ENCODE measurements at regions of chr1 and their contacts with region 1.

Region 1: DNA sequence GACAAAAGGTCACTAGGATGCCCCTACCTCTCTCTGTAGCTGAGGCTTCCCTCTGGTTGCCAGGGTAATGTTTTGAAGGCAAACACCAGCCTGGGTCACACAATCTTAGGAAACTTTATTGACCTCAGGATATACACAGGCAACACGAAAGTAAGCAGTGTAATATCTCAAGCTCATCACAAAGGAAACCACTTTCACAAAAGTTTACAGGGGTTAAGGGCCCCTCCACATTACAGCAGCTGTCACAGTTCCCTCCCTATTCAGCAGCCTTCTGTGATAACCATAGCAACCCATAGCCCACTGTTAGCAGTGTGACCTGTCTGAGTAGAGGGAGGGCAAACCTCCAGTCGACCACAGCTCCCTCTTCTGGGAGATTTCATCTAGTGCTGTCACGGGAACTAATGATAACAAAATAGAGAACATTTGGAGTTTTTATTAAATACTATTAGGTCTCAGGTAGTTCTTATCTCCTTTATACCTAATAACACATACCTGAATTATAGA is 149.8 kb downstream of the PTPRC start:
- DNase-seq: peak in 1 of 2 experiments; percentile 53
- H3K4me3 ChIP-seq: no peak overlapping the region
- H3K27ac ChIP-seq: peak overlapping the region; percentile 37
- H3K4me1 ChIP-seq: peaks cover 0 to 9% (median 7%) of the 10 kb centered on the region in 4 experiments; a peak in 4 of 7 replicates
- H3K27me3 ChIP-seq: no peaks in the 10 kb centered on the region
- CTCF ChIP-seq: peak; percentile 60 to 75 (median 60)
- EP300 ChIP-seq: no peak
- POLR2A ChIP-seq: no peak
- RAD21 ChIP-seq: peak; percentile 57 to 67

Region 2: DNA sequence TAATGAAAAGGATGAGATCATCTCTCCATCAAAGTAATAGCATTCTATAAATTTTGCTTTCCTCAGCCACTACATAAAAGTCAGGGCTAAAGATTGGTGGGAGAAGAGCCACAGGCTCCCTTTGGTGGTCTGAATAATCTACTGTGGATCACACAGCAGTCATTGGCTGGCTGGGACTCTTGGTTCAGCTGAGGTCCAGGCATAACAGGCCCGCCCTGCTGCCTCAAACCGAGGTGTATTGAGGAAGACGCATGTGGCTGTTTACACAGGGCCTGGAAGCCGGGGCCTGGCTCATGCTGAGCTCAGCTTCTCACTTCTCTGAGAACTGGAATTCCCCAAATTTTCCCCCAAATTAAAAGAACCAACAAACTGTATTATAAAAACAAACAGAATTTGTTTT is 10.6 kb before region 1 on chr1:
- CTCF ChIA-PET with region 1: interaction called, 21 read pairs
- POLR2A ChIA-PET with region 1: no interaction called
- DNase-seq: no peak
- H3K4me3 ChIP-seq: no peak overlapping the region
- H3K27ac ChIP-seq: no peak overlapping the region
- H3K4me1 ChIP-seq: peaks cover 0 to 5% (median 0%) of the 10 kb centered on the region in 4 experiments; a peak in 2 of 7 replicates
- H3K27me3 ChIP-seq: no peaks in the 10 kb centered on the region
- CTCF ChIP-seq: no peak
- EP300 ChIP-seq: no peak
- POLR2A ChIP-seq: no peak
- RAD21 ChIP-seq: no peak

Region 3: DNA sequence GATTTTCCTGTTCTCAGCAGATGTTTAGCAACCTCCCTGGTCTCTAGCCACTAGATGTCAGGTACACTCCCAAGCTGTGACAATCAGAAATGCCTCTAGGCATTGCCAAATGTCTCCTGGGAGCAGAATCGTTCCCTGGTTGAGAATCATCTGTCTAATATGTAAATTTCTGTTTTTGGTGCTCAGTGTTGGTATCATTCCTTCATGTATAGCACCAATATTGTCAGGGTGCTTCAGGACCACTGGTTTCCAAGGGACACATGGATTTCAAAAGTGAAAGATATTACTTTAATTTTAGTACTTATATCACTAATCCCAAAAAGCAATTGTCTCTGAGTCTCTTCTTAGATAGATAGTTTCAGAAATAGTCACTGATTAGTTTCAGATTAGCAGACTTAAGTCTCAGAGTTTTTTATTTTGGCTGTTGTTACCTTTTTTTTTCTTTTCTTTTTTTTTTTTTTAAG is 10.3 kb after region 1 on chr1:
- CTCF ChIA-PET with region 1: interaction called, 23 read pairs
- POLR2A ChIA-PET with region 1: no interaction called
- DNase-seq: no peak
- H3K4me3 ChIP-seq: no peak overlapping the region
- H3K27ac ChIP-seq: no peak overlapping the region
- H3K4me1 ChIP-seq: no peaks in the 10 kb centered on the region
- H3K27me3 ChIP-seq: no peaks in the 10 kb centered on the region
- CTCF ChIP-seq: no peak
- EP300 ChIP-seq: no peak
- POLR2A ChIP-seq: no peak
- RAD21 ChIP-seq: 0 out of 4 replicates have a peak, but pooled peaks of 1 of the 2 experiments have one; percentile 15

Region 4: GRCh38 chr1:198809247-198809646 is 20.6 kb after region 1 on chr1:
- CTCF ChIA-PET with region 1: interaction called, 14 read pairs
- POLR2A ChIA-PET with region 1: no interaction called
- DNase-seq: no peak
- H3K4me3 ChIP-seq: no peak overlapping the region
- H3K27ac ChIP-seq: no peak overlapping the region
- H3K4me1 ChIP-seq: no peaks in the 10 kb centered on the region
- H3K27me3 ChIP-seq: no peaks in the 10 kb centered on the region
- CTCF ChIP-seq: no peak
- EP300 ChIP-seq: no peak
- POLR2A ChIP-seq: no peak
- RAD21 ChIP-seq: no peak

Region 5: DNA sequence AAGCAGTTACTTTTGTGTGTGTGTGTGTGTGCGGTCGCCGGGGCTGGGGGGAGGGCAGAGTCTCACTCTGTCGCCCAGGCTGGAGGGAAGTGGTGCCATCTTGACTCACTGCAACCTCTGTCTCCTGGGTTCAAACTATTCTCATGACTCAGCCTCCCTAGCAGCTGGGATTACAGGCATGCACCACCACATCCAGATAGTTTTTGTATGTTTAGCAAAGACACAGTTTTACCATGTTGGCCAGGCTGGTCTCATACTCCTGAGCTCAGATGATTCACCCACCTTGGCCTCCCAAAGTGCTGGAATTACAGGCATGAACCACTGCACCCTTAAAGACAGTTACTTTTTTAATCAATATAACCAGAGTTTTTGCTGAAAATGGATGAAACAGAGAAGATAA is 57.2 kb after region 1 on chr1:
- CTCF ChIA-PET with region 1: no interaction called
- POLR2A ChIA-PET with region 1: no interaction called
- DNase-seq: no peak
- H3K4me3 ChIP-seq: no peak overlapping the region
- H3K27ac ChIP-seq: no peak overlapping the region
- H3K4me1 ChIP-seq: no peaks in the 10 kb centered on the region
- H3K27me3 ChIP-seq: peaks cover 0 to 4% (median 0%) of the 10 kb centered on the region in 4 experiments; a peak in 1 of 7 replicates
- CTCF ChIP-seq: no peak
- EP300 ChIP-seq: no peak
- POLR2A ChIP-seq: no peak
- RAD21 ChIP-seq: no peak

Region 6: GRCh38 chr1:199113265-199113869 is 324.8 kb after region 1 on chr1:
- CTCF ChIA-PET with region 1: interaction called, 20 read pairs
- POLR2A ChIA-PET with region 1: no interaction called
- DNase-seq: peak; percentile 38 to 73
- H3K4me3 ChIP-seq: no peak overlapping the region
- H3K27ac ChIP-seq: no peak overlapping the region
- H3K4me1 ChIP-seq: 0 out of 7 replicates have a peak, but pooled peaks cover 0 to 5% (median 0%) of the 10 kb centered on the region in 4 experiments
- H3K27me3 ChIP-seq: no peaks in the 10 kb centered on the region
- CTCF ChIP-seq: peak; percentile 79 to 96 (median 92)
- EP300 ChIP-seq: no peak
- POLR2A ChIP-seq: no peak
- RAD21 ChIP-seq: peak; percentile 87 to 91